ENCODE measurements at regions of chr3 and their contacts with region 1.

Region 1: DNA sequence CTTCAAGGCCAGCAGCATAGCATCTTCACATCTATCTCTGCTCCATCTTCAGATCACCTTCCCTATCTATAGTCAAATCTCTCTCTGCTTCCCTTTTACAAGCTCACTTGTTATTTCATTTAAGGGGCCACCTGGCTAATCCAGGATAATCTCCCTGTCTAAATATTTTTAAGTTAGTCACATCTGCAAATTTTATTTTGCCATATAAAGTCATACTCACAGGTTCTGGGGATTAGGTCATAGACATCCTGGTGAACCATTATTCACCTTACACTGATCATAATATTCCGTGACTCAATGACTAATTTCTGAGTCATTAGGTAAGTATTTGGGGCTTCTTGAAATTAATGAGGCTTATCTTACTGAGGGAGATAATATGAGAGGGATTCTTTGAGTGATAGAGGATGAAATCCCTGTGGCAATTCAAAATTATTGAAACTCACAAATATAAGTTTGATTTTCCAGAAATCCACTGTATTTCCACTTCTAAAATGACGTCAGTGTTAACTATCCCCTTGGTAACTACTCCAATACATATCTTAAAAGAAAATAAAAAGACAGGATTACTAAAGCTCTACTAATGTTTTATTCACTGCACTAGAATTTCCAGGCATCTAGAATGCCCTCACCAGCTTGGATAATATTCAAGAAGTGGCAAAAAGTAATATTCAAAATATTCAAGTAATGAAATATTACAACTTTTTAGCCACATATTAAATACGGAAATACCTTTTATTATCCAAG is 93.7 kb upstream of the RBMS3 start:
- DNase-seq: no peak
- ATAC-seq: peak; percentile 43
- H3K4me3 Mint-ChIP-seq: no peak overlapping the region
- H3K27ac Mint-ChIP-seq: peak overlapping the region; percentile 64
- H3K4me1 Mint-ChIP-seq: peaks cover 22% of the 10 kb centered on the region
- H3K27me3 Mint-ChIP-seq: no peaks in the 10 kb centered on the region

Region 2: DNA sequence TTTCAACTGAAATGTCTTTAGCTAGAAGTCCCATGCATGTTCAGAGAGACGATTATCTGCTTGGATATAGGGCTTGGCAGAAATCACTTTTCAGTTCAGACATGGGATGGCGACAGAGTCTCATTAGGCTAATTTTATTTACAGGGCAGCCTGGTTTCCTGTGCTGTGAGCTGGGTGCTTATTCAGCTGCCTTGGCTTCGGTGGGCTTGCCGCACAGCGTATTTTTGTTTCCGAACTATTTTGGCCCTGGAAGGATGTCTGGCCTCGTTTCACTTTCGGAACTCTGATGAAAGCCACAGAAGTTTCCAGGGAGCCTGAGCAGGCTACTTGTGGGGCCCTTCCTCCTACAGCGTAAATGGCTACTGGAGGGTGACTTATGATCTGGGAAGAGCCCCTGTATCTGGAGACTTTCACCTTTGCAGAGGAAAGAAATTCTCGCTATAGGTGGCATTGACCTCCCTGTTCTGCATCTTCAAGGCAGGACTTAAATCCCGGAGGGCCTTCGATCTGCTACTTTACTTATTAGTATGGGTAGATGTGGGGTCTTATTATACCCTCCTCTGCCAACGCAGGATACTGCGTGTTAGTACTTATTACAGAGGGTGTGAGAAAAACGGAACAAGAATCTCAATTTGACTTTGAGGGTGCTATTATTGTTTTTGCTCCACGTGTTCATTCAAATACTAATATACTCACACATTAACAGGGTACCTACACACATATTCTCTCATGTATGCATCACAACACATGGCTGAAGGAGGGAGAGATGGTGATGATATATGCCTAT is 270.2 kb before region 1 on chr3:
- CTCF ChIA-PET with region 1: no interaction called
- POLR2A ChIA-PET with region 1: no interaction called
- intact Hi-C with region 1: loop called in 1 of 2 experiments (anchors 5 kb)
- DNase-seq: peak; percentile 25
- ATAC-seq: peak; percentile 66
- H3K4me3 Mint-ChIP-seq: no peak overlapping the region
- H3K27ac Mint-ChIP-seq: no peak overlapping the region
- H3K4me1 Mint-ChIP-seq: peaks cover 2% of the 10 kb centered on the region
- H3K27me3 Mint-ChIP-seq: peaks cover 2% of the 10 kb centered on the region

Region 3: GRCh38 chr3:28935146-28935545 is 252.0 kb before region 1 on chr3:
- CTCF ChIA-PET with region 1: no interaction called
- POLR2A ChIA-PET with region 1: no interaction called
- intact Hi-C with region 1: loop called in 1 of 2 experiments (anchors 10 kb)
- DNase-seq: peak; percentile 13
- ATAC-seq: peak; percentile 73
- H3K4me3 Mint-ChIP-seq: no peak overlapping the region
- H3K27ac Mint-ChIP-seq: peak overlapping the region; percentile 59
- H3K4me1 Mint-ChIP-seq: peaks cover 25% of the 10 kb centered on the region
- H3K27me3 Mint-ChIP-seq: peaks cover 5% of the 10 kb centered on the region

Region 4: DNA sequence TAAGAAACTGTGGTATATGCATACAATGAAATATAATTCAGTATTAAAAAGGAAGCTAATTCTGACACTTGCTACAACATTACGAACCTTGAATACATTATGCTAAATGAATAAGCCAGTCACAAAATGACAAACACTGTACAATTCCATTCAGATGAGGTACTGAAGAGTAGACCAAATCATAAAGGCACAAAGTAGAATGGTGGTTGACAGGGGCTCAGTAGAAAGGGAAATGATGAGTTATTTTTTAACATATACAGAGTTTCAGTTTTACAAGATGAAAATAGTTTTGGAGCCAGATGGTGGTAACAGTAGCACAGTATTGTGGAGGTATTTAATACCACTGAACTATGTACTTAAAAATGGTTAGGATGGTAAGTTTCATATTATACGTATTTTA is 160.9 kb before region 1 on chr3:
- CTCF ChIA-PET with region 1: no interaction called
- POLR2A ChIA-PET with region 1: no interaction called
- intact Hi-C with region 1: loop called in 1 of 2 experiments (anchors 1 kb)
- DNase-seq: no peak
- ATAC-seq: peak; percentile 95
- H3K4me3 Mint-ChIP-seq: no peak overlapping the region
- H3K27ac Mint-ChIP-seq: no peak overlapping the region
- H3K4me1 Mint-ChIP-seq: peaks cover 10% of the 10 kb centered on the region
- H3K27me3 Mint-ChIP-seq: peaks cover 4% of the 10 kb centered on the region

Region 5: DNA sequence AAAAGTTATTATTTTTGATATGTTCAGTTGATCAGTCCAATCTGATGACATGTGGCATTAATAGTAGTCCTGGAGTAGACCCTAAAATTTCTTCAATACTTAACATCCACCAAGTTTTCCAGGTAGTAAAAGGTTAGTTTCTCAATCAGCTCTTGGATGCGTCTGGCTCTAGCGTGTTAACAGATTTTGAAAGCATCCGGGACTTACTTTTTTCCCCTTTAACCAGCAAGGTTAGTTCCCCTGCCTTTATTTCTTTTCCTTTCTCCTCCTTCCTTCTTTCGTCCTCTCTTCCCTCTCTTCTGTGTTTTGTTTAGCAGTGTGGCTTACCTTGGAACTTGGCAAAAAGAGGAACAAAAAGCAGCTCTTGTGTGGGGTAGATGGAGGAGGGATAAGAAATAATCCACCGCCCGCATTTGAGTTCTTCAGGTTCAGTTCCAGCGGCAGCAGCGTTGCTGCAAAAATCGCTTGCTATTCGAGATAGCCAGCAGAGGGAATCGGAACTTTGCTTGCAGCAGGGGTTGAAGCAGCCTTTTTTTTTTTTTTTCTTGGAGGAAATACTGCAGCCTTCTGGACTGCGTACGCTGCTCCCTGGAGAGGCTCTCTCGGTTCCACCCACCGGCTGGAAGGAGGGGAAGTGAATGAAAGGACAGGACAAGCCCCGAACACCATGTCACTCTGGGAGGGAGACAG is 93.4 kb after region 1 on chr3 and contains the start of gene RBMS3:
- CTCF ChIA-PET with region 1: no interaction called
- POLR2A ChIA-PET with region 1: no interaction called
- intact Hi-C with region 1: loop called in 1 of 2 experiments (anchors 2 kb)
- DNase-seq: peak; percentile 48
- ATAC-seq: peak; percentile 14
- H3K4me3 Mint-ChIP-seq: peak within 1 kb of the TSS; percentile 70
- H3K27ac Mint-ChIP-seq: peak within 1 kb of the TSS; percentile 73
- H3K4me1 Mint-ChIP-seq: peaks cover 35% of the 10 kb centered on the region
- H3K27me3 Mint-ChIP-seq: peaks cover 13% of the 10 kb centered on the region
- total RNA-seq, gene RBMS3: 1.5 to 2.0 TPM

Measured in activated CD4-positive, alpha-beta T cell treated with anti-CD3 and anti-CD28 coated beads for 36 hours (primary cell).